K562 (cell line): ENCODE measurements at regions of chr2 and their contacts with region 1.

Region 1: GRCh38 chr2:138787053-138787666 is 7.0 kb upstream of the NXPH2 start:
- DNase-seq: peak in 2 of 4 experiments; percentile 7 to 18
- ATAC-seq: no peak
- H3K4me3 ChIP-seq: no peak overlapping the region
- H3K27ac ChIP-seq: no peak overlapping the region
- H3K4me1 ChIP-seq: no peaks in the 10 kb centered on the region
- H3K27me3 ChIP-seq: peaks cover 0 to 2% of the 10 kb centered on the region in 2 experiments; a peak in 1 of 5 replicates
- CTCF ChIP-seq: peak; percentile 17 to 61 (median 48); a peak in 5 of 6 replicates
- EP300 ChIP-seq: no peak
- POLR2A ChIP-seq: no peak
- RAD21 ChIP-seq: peak; percentile 49 to 73

Region 2: DNA sequence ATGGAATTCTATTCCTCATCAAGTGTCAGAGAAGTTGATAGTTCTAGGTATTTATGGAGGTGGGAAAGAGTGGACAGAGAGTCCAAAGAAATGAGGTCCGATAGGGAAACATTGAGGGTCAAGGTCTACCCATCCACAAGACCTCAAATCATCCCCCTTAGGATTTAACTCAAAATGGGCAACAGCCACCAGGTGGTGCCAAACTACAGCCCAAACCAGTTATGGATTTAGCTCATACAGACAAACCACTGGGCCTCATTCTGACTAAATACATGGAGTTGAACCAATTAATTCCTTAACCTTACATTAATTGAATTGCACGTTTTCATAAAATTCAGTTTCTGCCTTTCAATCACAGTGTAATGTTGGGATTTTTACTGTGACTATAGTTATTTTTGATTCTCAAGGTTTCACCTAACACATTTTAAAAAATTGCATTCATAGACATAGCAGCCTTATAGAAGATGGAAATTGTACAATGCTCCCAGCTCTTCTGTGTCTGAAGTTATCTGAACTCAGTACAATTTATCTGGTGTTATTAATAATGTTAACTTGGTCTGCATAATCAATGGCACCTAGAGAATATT is 921.1 kb before region 1 on chr2:
- CTCF ChIA-PET with region 1: no interaction called
- POLR2A ChIA-PET with region 1: no interaction called
- in situ Hi-C with region 1: no loop called
- intact Hi-C with region 1: loop called (anchors 5 kb)
- DNase-seq: peak; percentile 45 to 68 (median 52)
- ATAC-seq: peak; percentile 93
- H3K4me3 ChIP-seq: no peak overlapping the region
- H3K27ac ChIP-seq: no peak overlapping the region
- H3K4me1 ChIP-seq: no peaks in the 10 kb centered on the region
- H3K27me3 ChIP-seq: no peaks in the 10 kb centered on the region
- CTCF ChIP-seq: peak; percentile 68 to 81 (median 74)
- EP300 ChIP-seq: no peak
- POLR2A ChIP-seq: no peak
- RAD21 ChIP-seq: peak; percentile 58 to 87

Region 3: GRCh38 chr2:137910641-137911040 is 876.5 kb before region 1 on chr2:
- CTCF ChIA-PET with region 1: no interaction called
- POLR2A ChIA-PET with region 1: no interaction called
- in situ Hi-C with region 1: no loop called
- intact Hi-C with region 1: loop called (anchors 2 kb)
- DNase-seq: peak in 2 of 4 experiments; percentile 7 to 21
- ATAC-seq: no peak
- H3K4me3 ChIP-seq: no peak overlapping the region
- H3K27ac ChIP-seq: no peak overlapping the region
- H3K4me1 ChIP-seq: no peaks in the 10 kb centered on the region
- H3K27me3 ChIP-seq: peaks cover 2 to 4% of the 10 kb centered on the region in 2 experiments; a peak in 1 of 5 replicates
- CTCF ChIP-seq: peak in 2 of 3 experiments; percentile 10 to 72; a peak in 4 of 6 replicates
- EP300 ChIP-seq: no peak
- POLR2A ChIP-seq: no peak
- RAD21 ChIP-seq: peak; percentile 72 to 81

Region 4: DNA sequence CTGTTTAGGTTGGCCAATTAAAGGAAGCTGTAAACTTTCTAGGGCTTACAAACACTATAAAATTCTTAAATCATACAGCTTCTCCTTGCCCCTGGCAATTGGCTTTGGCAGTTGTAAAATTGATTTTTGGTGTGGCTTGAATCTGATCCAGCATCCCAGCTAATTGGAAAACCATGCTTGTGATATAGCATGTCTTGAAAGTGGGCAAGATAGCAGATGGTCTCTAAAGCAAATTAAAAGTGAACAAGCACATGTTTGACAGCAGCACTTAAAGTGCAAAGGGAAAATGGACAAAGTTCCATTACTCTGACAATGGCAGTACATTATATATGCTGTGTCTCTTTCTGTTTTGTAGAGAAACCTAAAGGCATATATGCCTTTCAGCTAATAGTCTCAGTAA is 296.0 kb after region 1 on chr2:
- CTCF ChIA-PET with region 1: no interaction called
- POLR2A ChIA-PET with region 1: no interaction called
- in situ Hi-C with region 1: no loop called
- intact Hi-C with region 1: no loop called
- DNase-seq: no peak
- ATAC-seq: no peak
- H3K4me3 ChIP-seq: no peak overlapping the region
- H3K27ac ChIP-seq: no peak overlapping the region
- H3K4me1 ChIP-seq: no peaks in the 10 kb centered on the region
- H3K27me3 ChIP-seq: no peaks in the 10 kb centered on the region
- CTCF ChIP-seq: no peak
- EP300 ChIP-seq: no peak
- POLR2A ChIP-seq: no peak
- RAD21 ChIP-seq: no peak